K562 (cell line): ENCODE measurements at regions of chr12 and their contacts with region 1.

Region 1: GRCh38 chr12:43444940-43445564 is 107.0 kb downstream of the ADAMTS20 start:
- DNase-seq: peak; percentile 4 to 63 (median 26)
- ATAC-seq: 0 out of 3 replicates have a peak, but pooled peaks have one; percentile 56
- H3K4me3 ChIP-seq: no peak overlapping the region
- H3K27ac ChIP-seq: no peak overlapping the region
- H3K4me1 ChIP-seq: no peaks in the 10 kb centered on the region
- H3K27me3 ChIP-seq: no peaks in the 10 kb centered on the region
- CTCF ChIP-seq: peak; percentile 30 to 54 (median 46); a peak in 5 of 6 replicates
- EP300 ChIP-seq: no peak
- POLR2A ChIP-seq: no peak
- RAD21 ChIP-seq: peak; percentile 55 to 56

Region 2: GRCh38 chr12:43737646-43738045 is 292.6 kb after region 1 on chr12:
- CTCF ChIA-PET with region 1: no interaction called
- POLR2A ChIA-PET with region 1: no interaction called
- in situ Hi-C with region 1: no loop called
- intact Hi-C with region 1: loop called (anchors 10 kb)
- DNase-seq: no peak
- ATAC-seq: no peak
- H3K4me3 ChIP-seq: no peak overlapping the region
- H3K27ac ChIP-seq: no peak overlapping the region
- H3K4me1 ChIP-seq: no peaks in the 10 kb centered on the region
- H3K27me3 ChIP-seq: no peaks in the 10 kb centered on the region
- CTCF ChIP-seq: no peak
- EP300 ChIP-seq: no peak
- POLR2A ChIP-seq: no peak
- RAD21 ChIP-seq: no peak